CD4-positive, alpha-beta memory T cell (primary cell): ENCODE measurements at regions of chr9 and their contacts with region 1.

Region 1: DNA sequence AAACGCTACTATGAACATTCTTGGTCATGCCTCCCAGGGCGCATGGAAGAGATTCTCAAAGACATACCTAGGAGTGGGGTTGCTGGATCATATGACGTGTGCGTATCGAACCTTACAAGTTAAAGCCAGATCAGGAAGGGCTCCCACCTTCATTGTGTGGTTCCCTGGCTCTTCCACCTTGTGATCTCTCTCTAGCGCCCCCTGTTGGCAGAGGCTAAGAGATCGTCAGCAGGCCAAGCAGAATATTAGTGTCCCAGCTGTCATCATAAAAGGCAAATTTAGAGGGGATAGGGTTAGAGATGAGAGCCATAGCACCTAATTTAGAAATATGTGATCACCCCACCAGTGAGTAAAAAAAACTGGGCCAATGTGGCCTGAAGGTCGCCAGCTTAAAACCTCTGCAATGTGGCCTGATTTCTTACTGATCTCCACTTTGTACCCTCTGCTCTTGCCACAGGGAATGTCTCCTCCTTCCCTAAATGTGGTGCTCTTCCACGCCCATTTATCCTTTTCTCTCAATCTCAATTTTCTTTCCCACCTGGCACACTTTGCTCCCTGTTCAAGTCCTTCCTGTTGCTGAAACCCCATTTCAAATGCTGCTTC is 91.7 kb upstream of the SHB start:
- DNase-seq: peak in 4 of 5 donors; percentile 26 to 42 (median 33)
- H3K4me3 ChIP-seq: no peak overlapping the region
- H3K4me3 Mint-ChIP-seq: no peak overlapping the region
- H3K27ac ChIP-seq: no peak overlapping the region
- H3K27ac Mint-ChIP-seq: no peak overlapping the region
- H3K4me1 ChIP-seq: no peaks in the 10 kb centered on the region
- H3K4me1 Mint-ChIP-seq: peaks cover 0 to 4% (median 2%) of the 10 kb centered on the region in 4 donors
- H3K27me3 ChIP-seq: no peaks in the 10 kb centered on the region
- H3K27me3 Mint-ChIP-seq: peaks cover 0 to 1% of the 10 kb centered on the region in 2 donors

Region 2: GRCh38 chr9:38172585-38172984 is 11.9 kb after region 1 on chr9:
- CTCF ChIA-PET with region 1: interaction called, 10 read pairs
- POLR2A ChIA-PET with region 1: no interaction called
- intact Hi-C with region 1: no loop called
- DNase-seq: no peak
- H3K4me3 ChIP-seq: no peak overlapping the region
- H3K4me3 Mint-ChIP-seq: no peak overlapping the region
- H3K27ac ChIP-seq: no peak overlapping the region
- H3K27ac Mint-ChIP-seq: no peak overlapping the region
- H3K4me1 ChIP-seq: no peaks in the 10 kb centered on the region
- H3K4me1 Mint-ChIP-seq: no peaks in the 10 kb centered on the region
- H3K27me3 ChIP-seq: no peaks in the 10 kb centered on the region
- H3K27me3 Mint-ChIP-seq: peaks cover 12% of the 10 kb centered on the region in 2 donors